ENCODE measurements at regions of chr4 and their contacts with region 1.

Region 1: DNA sequence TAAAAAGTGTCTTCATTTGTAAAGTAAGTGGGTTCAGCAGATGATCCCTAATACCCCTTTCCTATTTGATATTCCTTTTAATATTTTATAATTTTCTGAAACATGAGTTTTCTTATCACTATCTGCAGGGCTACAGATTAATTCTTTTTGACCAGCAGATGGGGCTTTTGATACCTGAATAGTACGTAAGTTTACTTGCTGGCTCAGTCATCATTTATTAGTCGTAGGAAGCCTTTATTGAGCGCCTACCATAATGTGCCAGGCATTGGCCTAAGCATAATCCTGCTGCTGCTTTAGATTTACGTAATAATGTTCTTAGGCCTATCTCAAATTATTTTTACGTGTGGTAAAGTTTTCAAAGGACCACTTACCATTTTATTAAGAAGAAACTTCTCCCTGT is 33.1 kb downstream of the OSTC start:
- DNase-seq: peak in 1 of 9 donors; percentile 16
- ATAC-seq: no peak
- H3K4me3 ChIP-seq: no peak overlapping the region
- H3K4me3 Mint-ChIP-seq: no peak overlapping the region
- H3K27ac ChIP-seq: no peak overlapping the region
- H3K27ac Mint-ChIP-seq: no peak overlapping the region
- H3K4me1 ChIP-seq: no peaks in the 10 kb centered on the region
- H3K4me1 Mint-ChIP-seq: no peaks in the 10 kb centered on the region
- H3K27me3 ChIP-seq: no peaks in the 10 kb centered on the region
- H3K27me3 Mint-ChIP-seq: peaks cover 0 to 2% (median 0%) of the 10 kb centered on the region in 5 donors

Region 2: DNA sequence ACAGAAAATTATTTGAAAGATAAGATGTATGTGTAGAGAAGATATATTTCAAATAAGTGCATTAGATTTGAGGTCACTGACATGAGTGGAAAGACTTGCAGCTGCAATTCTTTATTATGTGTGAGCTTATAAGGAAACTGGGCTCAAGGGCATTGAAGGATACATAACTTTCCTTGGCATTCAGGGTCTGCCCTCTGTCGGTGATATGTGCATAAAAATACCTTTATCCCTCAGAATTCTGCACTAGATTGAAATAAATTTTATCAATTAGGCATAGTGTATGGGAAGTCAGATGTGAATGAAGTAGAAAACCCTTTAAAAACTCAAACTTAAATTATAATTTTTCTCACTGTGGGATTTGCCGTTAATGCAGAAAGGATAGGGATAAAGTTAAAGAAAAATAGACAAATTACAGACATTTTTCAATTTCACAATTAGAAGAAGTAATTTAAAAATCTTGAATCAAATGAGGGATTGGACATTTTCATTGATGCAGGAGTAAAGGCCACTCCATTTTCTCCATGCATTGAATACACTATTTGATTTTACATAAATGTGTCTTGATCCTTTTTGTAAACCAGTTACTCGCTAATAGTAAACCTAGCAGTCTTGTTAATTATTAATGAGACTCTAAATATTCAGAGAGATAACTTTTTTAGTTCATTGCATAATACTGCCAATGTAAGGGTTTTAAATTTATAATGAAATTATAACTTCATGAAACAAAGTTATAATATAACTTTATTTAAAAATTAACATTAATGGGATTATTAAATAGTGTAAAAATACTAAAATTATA is 100.4 kb after region 1 on chr4:
- CTCF ChIA-PET with region 1: no interaction called
- POLR2A ChIA-PET with region 1: no interaction called
- intact Hi-C with region 1: loop called in 1 of 2 experiments (anchors 5 kb)
- DNase-seq: peak in 1 of 9 donors; percentile 22
- ATAC-seq: no peak
- H3K4me3 ChIP-seq: no peak overlapping the region
- H3K4me3 Mint-ChIP-seq: no peak overlapping the region
- H3K27ac ChIP-seq: no peak overlapping the region
- H3K27ac Mint-ChIP-seq: no peak overlapping the region
- H3K4me1 ChIP-seq: no peaks in the 10 kb centered on the region
- H3K4me1 Mint-ChIP-seq: no peaks in the 10 kb centered on the region
- H3K27me3 ChIP-seq: no peaks in the 10 kb centered on the region
- H3K27me3 Mint-ChIP-seq: peaks cover 0 to 16% (median 8%) of the 10 kb centered on the region in 5 donors

Region 3: GRCh38 chr4:109294006-109294405 is 610.5 kb after region 1 on chr4:
- CTCF ChIA-PET with region 1: no interaction called
- POLR2A ChIA-PET with region 1: no interaction called
- intact Hi-C with region 1: loop called in 1 of 2 experiments (anchors 10 kb)
- DNase-seq: peak in 2 of 9 donors; percentile 11 to 13
- ATAC-seq: peak; percentile 70
- H3K4me3 ChIP-seq: no peak overlapping the region
- H3K4me3 Mint-ChIP-seq: no peak overlapping the region
- H3K27ac ChIP-seq: no peak overlapping the region
- H3K27ac Mint-ChIP-seq: no peak overlapping the region
- H3K4me1 ChIP-seq: no peaks in the 10 kb centered on the region
- H3K4me1 Mint-ChIP-seq: no peaks in the 10 kb centered on the region
- H3K27me3 ChIP-seq: no peaks in the 10 kb centered on the region
- H3K27me3 Mint-ChIP-seq: peaks cover 34 to 41% (median 37%) of the 10 kb centered on the region in 5 donors

Region 4: DNA sequence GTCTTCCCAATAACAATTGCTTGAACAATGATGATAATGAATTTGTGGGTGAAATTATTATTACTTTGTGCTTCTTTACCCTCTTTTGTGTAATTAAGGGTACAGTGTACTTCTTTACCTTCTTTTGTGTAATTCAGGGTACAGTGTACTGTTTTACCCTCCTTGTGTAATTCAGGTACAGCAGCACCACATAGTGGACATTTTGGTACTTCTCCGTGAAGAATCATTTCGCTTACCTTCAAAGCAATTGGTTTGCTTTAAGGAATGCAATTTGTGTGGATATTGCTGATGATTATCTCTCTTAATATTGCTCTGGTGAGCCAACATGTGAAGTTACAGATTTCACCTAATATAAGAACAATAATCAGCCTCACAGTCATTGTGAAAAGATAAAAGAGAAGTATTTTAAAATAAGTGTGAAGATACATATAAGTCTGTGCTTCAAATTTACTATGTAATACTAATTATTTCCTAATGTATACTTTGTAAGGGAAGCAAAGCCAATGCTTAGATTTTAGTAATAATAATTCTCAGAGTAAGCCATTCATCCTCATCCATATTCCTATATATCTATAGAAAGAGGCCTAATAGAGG is 723.0 kb after region 1 on chr4:
- CTCF ChIA-PET with region 1: interaction called, 3 read pairs
- POLR2A ChIA-PET with region 1: no interaction called
- intact Hi-C with region 1: loop called (anchors 1 to 5 kb)
- DNase-seq: peak in 7 of 9 donors; percentile 21 to 63 (median 42)
- ATAC-seq: peak; percentile 79
- H3K4me3 ChIP-seq: no peak overlapping the region
- H3K4me3 Mint-ChIP-seq: no peak overlapping the region
- H3K27ac ChIP-seq: no peak overlapping the region
- H3K27ac Mint-ChIP-seq: no peak overlapping the region
- H3K4me1 ChIP-seq: no peaks in the 10 kb centered on the region
- H3K4me1 Mint-ChIP-seq: no peaks in the 10 kb centered on the region
- H3K27me3 ChIP-seq: no peaks in the 10 kb centered on the region
- H3K27me3 Mint-ChIP-seq: peaks cover 0 to 27% (median 0%) of the 10 kb centered on the region in 5 donors